Posterior vena cava (tissue), 2 donors: ENCODE measurements at regions of chr4 and their contacts with region 1.

Region 1: DNA sequence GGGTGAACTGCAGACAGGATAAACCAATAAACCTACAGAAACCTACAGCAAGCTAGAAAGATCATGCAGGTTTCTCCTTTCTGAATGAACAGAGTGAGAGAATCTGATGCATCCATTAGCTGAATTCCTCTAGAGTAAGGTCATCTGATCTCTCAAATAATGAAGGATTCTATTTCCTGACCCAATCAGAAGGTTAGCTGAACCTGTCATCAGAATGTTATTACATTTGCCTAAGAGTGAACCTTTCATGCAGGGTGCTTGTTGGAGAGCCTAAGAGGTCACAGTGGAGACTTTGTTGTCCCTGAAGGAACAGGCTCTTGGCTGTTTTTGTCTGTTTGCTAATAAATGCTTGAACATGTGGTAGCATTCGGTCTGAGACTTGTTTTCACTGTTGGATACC is 24.0 kb downstream of the MEPE start:
- DNase-seq: no peak

Region 2: GRCh38 chr4:87835197-87835596 is 21.6 kb before region 1 on chr4:
- intact Hi-C with region 1: no loop called
- DNase-seq: no peak

Region 3: DNA sequence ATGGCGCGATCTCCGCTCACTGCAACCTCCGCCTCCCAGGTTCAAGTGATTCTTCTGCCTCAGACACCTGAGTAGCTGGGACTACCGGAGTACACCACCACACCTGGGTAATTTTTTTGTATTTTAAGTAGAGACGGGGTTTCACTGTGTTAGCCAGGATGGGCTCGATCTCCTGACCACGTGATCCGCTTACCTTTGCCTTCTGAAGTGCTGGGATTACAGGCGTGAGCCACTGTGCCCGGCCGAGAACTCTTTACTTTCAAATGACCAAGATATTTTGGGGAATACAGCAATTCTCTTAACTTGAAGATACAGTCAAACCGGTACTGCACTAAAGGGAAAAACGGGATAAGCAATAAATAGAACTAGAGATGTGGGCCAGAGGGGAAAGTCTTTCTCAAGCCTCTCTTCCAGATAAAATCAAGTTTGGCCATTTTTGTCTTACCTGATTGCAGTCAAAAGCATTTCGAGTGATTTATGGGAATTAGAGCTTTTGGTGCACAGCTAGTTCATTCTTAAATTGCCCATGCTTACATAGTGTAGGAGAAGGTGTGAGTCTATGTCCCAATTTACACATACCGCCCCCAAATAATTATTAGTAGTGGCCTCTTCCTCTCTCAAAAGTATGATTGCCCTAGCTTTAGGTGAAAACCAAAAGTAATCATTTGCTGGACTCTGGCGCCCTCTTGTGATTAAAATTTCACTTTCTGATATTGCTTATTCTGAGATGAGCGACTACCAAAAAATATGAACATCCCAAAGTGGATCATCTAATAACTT is 354.8 kb after region 1 on chr4:
- intact Hi-C with region 1: loop called (anchors 5 kb)
- DNase-seq: no peak